ENCODE measurements at regions of chr5 and their contacts with region 1.

Region 1: GRCh38 chr5:112995764-112996618 is 19.4 kb downstream of the DCP2 start:
- DNase-seq: peak in 3 of 4 donors; percentile 46 to 77 (median 65)
- ATAC-seq: peak; percentile 94
- H3K4me3 ChIP-seq: no peak overlapping the region
- H3K27ac ChIP-seq: no peak overlapping the region
- H3K4me1 ChIP-seq: peaks cover 0 to 8% of the 10 kb centered on the region in 2 donors
- H3K27me3 ChIP-seq: no peaks in the 10 kb centered on the region
- CTCF ChIP-seq: peak; percentile 80 to 90

Region 2: DNA sequence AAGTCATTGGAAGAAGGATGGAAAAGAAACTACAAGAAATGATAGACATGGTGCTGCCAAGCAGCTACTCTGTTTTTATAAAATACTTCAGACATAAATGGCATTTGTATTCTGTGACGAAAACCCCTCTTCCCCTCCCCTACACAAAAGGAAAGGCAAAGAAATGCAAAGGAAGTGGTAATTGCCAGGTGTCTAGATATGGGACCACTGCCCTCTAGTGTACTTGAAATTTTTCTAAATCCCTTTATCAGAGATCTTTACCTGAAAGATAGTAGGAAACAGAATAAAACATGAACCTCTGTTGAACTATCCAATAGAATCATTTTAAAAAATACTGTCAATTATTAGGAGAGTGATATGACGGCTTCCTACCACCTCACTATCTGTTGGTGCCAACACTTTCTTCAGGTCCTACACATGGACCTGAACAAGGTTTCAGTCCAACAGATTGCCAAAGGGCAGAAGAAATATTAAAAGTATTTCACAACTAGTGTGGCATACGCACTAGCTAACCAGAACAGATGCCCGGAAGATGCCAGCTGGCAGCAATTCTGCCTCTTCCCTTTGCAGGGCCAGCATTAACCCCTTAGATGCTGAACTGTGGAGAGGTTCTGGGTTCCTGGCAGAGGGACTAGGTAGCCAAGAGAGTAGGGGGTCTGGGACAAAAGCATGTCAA is 334.7 kb after region 1 on chr5:
- intact Hi-C with region 1: loop called in 1 of 2 experiments (anchors 10 kb)
- DNase-seq: peak in 2 of 4 donors; percentile 18 to 41
- ATAC-seq: peak; percentile 66
- H3K4me3 ChIP-seq: no peak overlapping the region
- H3K27ac ChIP-seq: no peak overlapping the region
- H3K4me1 ChIP-seq: peaks cover 0 to 9% of the 10 kb centered on the region in 2 donors
- H3K27me3 ChIP-seq: no peaks in the 10 kb centered on the region
- CTCF ChIP-seq: peak in 1 of 2 donors; percentile 16

Region 3: GRCh38 chr5:113513384-113514288 is 517.6 kb after region 1 on chr5 and contains the start of gene YTHDC2:
- intact Hi-C with region 1: loop called in 1 of 2 experiments (anchors 5 kb)
- DNase-seq: peak; percentile 84 to 96 (median 90)
- ATAC-seq: peak; percentile 98
- H3K4me3 ChIP-seq: peak within 1 kb of the TSS; percentile 64 to 86
- H3K27ac ChIP-seq: peak within 1 kb of the TSS; percentile 88
- H3K4me1 ChIP-seq: peaks cover 0 to 34% of the 10 kb centered on the region in 2 donors
- H3K27me3 ChIP-seq: peaks cover 4 to 17% of the 10 kb centered on the region in 2 donors
- CTCF ChIP-seq: peak in 1 of 2 donors; percentile 17
- polyA plus RNA-seq, gene YTHDC2: 37.4 to 49.3 (median 41.6) TPM

Measured in left lung (tissue), 14 donors.